Upper lobe of right lung (tissue), 1 donor: ENCODE measurements at regions of chr14 and their contacts with region 1.

Region 1: GRCh38 chr14:60091550-60092530 is at the start of gene PCNX4:
- DNase-seq: peak; percentile 97
- ATAC-seq: peak; percentile 97
- H3K4me3 ChIP-seq: peak within 1 kb of the TSS; percentile 71
- H3K27ac ChIP-seq: peak within 1 kb of the TSS; percentile 98
- H3K4me1 ChIP-seq: peaks cover 18% of the 10 kb centered on the region
- H3K27me3 ChIP-seq: no peaks in the 10 kb centered on the region
- CTCF ChIP-seq: no peak
- total RNA-seq, gene PCNX4: 39.9 TPM

Region 2: DNA sequence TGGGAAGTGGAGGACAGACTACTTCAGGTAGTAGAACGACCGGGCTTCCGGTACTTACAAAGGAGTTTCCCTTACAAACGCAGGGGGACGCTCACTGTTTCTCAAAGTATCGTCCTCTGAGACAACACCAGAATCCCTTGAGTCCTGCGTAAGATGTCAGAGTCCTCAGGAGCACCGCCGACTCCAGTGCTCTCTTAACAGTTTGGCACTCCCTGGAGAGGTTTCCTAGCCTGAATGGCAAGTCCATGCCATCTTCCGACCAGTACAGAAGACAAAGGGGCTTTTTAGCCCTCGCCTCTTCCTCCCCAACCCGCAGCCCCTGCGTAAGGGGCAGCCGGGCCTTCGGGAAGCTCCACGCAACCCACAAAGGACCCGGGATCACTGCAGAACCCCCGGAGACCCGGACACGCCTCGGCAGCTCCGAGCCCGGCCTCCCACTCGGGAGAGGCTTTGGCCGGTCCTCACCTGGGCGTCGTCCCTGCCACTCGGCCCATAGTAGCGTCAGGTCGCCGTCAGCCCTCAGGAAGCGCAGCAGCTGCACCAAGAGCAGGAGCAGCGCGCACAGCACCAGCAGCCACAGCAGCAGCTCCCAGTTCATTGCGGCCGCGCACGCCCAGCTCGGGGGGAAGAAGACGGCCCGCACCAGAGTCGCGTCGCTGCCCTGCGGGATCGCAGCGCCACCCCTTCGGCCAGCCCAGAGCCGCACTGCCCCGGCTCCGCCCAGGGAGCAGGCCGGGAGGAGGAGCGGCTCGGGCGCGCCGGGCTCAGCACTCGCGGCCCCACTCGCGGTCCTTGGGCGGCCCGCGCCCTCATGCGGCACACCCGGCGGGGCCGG is 73.1 kb after region 1 on chr14 and contains the start of gene DHRS7:
- intact Hi-C with region 1: loop called (anchors 10 kb)
- DNase-seq: peak; percentile 94
- ATAC-seq: peak; percentile 98
- H3K4me3 ChIP-seq: peak within 1 kb of the TSS; percentile 95
- H3K27ac ChIP-seq: peak within 1 kb of the TSS; percentile 98
- H3K4me1 ChIP-seq: peaks cover 34% of the 10 kb centered on the region
- H3K27me3 ChIP-seq: no peaks in the 10 kb centered on the region
- CTCF ChIP-seq: peak; percentile 43
- total RNA-seq, gene DHRS7: 69.3 TPM